ENCODE measurements at regions of chr16 and their contacts with region 1.

Region 1: GRCh38 chr16:10981697-10982216 is 37.4 kb downstream of the CLEC16A start:
- DNase-seq: peak; percentile 53
- H3K4me3 ChIP-seq: no peak overlapping the region
- H3K27ac ChIP-seq: no peak overlapping the region
- H3K4me1 ChIP-seq: peaks cover 0 to 6% of the 10 kb centered on the region in 2 experiments; a peak in 2 of 4 replicates
- H3K27me3 ChIP-seq: no peaks in the 10 kb centered on the region
- CTCF ChIP-seq: peak; percentile 60
- EP300 ChIP-seq: no peak
- RAD21 ChIP-seq: peak; percentile 47

Region 2: DNA sequence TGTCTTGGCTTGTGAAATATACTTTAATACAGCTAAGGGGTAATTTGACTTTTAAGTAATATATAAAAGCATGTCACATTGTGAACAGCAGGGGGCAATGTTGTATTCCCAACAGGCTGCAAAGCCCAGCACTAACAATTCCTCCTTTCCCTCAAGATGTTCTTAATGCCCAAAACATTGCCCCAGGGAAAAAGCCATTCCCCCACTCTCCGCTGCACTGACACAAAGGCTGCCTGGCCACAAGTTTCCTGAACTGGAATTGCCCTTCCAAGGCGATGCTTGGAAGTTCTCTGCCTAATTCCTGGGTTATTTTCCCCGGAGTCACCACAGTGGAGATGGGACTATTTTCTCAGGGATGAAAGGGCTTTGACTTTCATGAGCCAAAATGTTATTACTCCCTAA is 10.2 kb before region 1 on chr16:
- CTCF ChIA-PET with region 1: interaction called, 52 read pairs
- POLR2A ChIA-PET with region 1: no interaction called
- DNase-seq: peak; percentile 63
- H3K4me3 ChIP-seq: no peak overlapping the region; a peak in 1 of 4 replicates
- H3K27ac ChIP-seq: peak overlapping the region; percentile 29 to 38; a peak in 1 of 4 replicates
- H3K4me1 ChIP-seq: peaks cover 5 to 21% of the 10 kb centered on the region in 2 experiments; a peak in 3 of 4 replicates
- H3K27me3 ChIP-seq: no peaks in the 10 kb centered on the region
- CTCF ChIP-seq: peak; percentile 85
- EP300 ChIP-seq: no peak
- RAD21 ChIP-seq: peak; percentile 98

Measured in SK-N-SH (cell line).